Left cardiac atrium (tissue), 4 donors: ENCODE measurements at regions of chr1 and their contacts with region 1.

Region 1: GRCh38 chr1:234730770-234731568 is 121.0 kb upstream of the IRF2BP2 start:
- DNase-seq: no peak
- ATAC-seq: no peak

Region 2: GRCh38 chr1:234772345-234773147 is 41.6 kb after region 1 on chr1:
- intact Hi-C with region 1: no loop called
- DNase-seq: peak; percentile 74
- ATAC-seq: peak; percentile 85 to 90

Region 3: GRCh38 chr1:234823191-234824176 is 92.5 kb after region 1 on chr1:
- intact Hi-C with region 1: no loop called
- DNase-seq: no peak
- ATAC-seq: no peak

Region 4: GRCh38 chr1:234862944-234863515 is 132.1 kb after region 1 on chr1:
- intact Hi-C with region 1: loop called in 1 of 2 experiments (anchors 10 kb)
- DNase-seq: peak; percentile 87
- ATAC-seq: peak; percentile 68 to 80